Dorsolateral prefrontal cortex (tissue), 120 donors: ENCODE measurements at regions of chr6 and their contacts with region 1.

Region 1: DNA sequence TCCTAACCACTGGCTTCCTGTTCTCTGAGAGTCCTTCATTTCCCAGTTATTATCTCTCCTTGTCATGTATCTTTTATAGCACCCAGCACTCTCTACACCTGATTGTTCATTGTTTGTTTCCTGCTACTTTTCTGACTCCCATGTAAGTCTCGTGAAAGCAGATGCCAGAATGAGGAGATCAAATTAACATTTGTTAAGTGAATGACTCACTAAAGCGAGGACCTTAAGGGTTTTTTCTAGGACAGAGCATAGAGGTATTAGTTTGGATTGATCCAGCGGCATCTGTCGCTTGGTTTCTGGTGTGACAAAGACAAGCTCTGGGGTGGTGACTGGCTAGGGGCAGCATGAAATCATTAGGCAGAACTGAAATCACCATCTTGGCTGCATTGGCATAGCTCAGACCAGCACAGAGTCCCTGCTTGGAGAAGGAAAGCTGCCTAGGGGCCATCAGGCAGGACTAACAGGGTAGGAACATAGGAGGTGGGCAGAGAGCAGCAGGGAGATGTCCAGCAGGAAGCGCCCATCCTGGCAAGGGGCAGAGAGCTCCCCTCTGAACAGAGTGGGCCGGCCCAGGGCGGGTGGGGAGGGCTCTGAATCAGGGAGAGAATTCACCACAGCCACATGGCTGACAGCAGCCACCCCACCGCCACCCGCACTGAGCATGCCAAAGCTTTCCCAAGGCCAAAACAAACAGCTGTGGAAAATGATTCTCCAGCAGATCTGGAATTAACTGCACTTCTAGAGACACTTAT is 97.1 kb upstream of the CEP85L start:
- DNase-seq: peak; percentile 30 to 86 (median 47)
- H3K4me3 ChIP-seq: peak overlapping the region in 57 of 59 donors; percentile 9 to 64 (median 39)
- H3K27ac ChIP-seq: peak overlapping the region in 29 of 59 donors; percentile 2 to 79 (median 38)
- H3K27me3 ChIP-seq: no peaks in the 10 kb centered on the region
- CTCF ChIP-seq: peak in 1 of 56 donors; percentile 20

Region 2: GRCh38 chr6:118574051-118574865 is 174.2 kb before region 1 on chr6:
- intact Hi-C with region 1: no loop called
- DNase-seq: no peak
- H3K4me3 ChIP-seq: no peak overlapping the region
- H3K27ac ChIP-seq: no peak overlapping the region
- H3K27me3 ChIP-seq: no peaks in the 10 kb centered on the region
- CTCF ChIP-seq: no peak

Region 3: GRCh38 chr6:118800394-118801071 is 52.0 kb after region 1 on chr6:
- intact Hi-C with region 1: loop called in 1 of 2 experiments (anchors 5 kb)
- DNase-seq: peak; percentile 44 to 97 (median 86)
- H3K4me3 ChIP-seq: peak overlapping the region in 55 of 59 donors; percentile 9 to 64 (median 39)
- H3K27ac ChIP-seq: peak overlapping the region in 52 of 59 donors; percentile 9 to 87 (median 66)
- H3K27me3 ChIP-seq: no peaks in the 10 kb centered on the region
- CTCF ChIP-seq: peak; percentile 85 to 100 (median 94)

Region 4: DNA sequence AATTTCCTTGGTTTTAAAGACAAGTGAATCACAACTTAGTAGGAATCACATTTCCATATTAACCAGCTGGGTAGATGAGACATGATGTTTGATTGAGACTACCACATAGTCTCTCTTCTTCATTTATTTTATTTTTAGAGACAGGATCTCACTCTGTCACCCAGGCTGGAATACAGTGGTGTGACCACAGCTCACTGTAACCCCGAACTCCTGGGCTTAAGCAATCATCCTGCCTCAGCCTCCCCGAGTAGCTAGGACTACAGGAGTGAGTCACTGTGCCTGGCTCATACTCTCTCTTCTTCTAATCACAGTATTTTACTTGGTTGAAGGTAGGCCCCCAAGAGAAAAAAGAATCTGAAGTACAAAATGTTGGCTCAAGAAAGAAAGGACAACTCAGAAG is 65.3 kb after region 1 on chr6:
- intact Hi-C with region 1: no loop called
- DNase-seq: no peak
- H3K4me3 ChIP-seq: no peak overlapping the region
- H3K27ac ChIP-seq: no peak overlapping the region
- H3K27me3 ChIP-seq: no peaks in the 10 kb centered on the region
- CTCF ChIP-seq: no peak